Left cardiac atrium (tissue), 4 donors: ENCODE measurements at regions of chr11 and their contacts with region 1.

Region 1: DNA sequence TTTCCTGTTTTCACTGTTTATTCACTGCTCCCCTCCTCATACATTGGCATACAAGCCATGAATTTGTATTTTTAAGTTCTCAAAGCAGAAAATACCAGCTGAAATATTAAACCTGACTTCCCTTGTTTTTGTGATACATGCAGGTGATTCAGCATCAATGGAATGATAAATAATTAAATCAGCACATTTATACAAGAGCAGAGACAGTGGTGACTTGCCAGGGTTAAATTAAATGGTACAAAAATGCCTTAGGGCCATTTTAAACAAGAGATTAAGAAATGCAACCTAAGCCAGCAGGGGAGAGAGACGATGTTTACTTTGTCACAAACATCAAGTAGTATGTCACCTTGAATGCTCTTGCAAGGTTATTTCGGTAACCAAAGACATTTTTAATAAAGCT is 95.9 kb upstream of the DDI1 start:
- DNase-seq: no peak
- ATAC-seq: no peak

Region 2: GRCh38 chr11:103892603-103893002 is 47.9 kb before region 1 on chr11:
- intact Hi-C with region 1: loop called in 1 of 2 experiments (anchors 5 kb)
- DNase-seq: no peak
- ATAC-seq: no peak